ENCODE measurements at regions of chr3 and their contacts with region 1.

Region 1: GRCh38 chr3:47522082-47522987 is 8.8 kb upstream of the ELP6 start:
- DNase-seq: peak; percentile 86
- H3K4me3 ChIP-seq: no peak overlapping the region
- H3K27ac ChIP-seq: no peak overlapping the region
- H3K4me1 ChIP-seq: no peaks in the 10 kb centered on the region
- H3K27me3 ChIP-seq: no peaks in the 10 kb centered on the region
- CTCF ChIP-seq: peak; percentile 85 to 90
- POLR2A ChIP-seq: no peak

Region 2: DNA sequence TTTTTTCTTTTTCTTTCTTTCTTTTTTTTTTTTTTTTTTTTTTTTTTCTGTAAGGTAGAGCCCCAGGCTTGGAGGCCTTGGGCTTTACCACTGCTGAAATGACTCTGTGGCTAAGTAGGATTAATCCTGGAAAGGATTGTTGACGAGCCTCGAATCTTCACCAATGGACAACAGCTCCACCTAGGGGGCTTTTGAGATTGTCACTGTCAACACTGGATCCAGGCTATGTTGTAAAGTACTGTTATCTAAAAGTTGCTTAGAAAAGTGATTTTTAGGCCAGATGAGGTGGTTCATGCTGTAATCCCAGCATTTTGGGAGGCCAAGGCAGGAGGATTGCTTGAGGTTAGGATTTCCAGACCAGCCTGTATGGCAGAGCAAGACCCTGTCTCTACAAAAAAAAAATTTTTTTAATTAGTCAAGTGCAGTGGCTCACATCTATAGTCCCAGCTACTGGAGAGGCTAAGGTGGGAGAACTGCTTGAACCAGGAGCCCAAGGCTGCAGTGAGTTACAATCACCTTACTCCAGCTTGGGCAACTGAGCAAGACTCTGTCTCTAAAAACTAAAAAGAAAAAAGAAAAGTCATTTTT is 198.0 kb before region 1 on chr3:
- CTCF ChIA-PET with region 1: no interaction called
- POLR2A ChIA-PET with region 1: no interaction called
- dilution Hi-C with region 1: no loop called
- intact Hi-C with region 1: no loop called
- DNase-seq: peak; percentile 77
- H3K4me3 ChIP-seq: no peak overlapping the region
- H3K27ac ChIP-seq: no peak overlapping the region
- H3K4me1 ChIP-seq: no peaks in the 10 kb centered on the region
- H3K27me3 ChIP-seq: no peaks in the 10 kb centered on the region
- CTCF ChIP-seq: peak; percentile 60 to 72
- POLR2A ChIP-seq: no peak

Region 3: DNA sequence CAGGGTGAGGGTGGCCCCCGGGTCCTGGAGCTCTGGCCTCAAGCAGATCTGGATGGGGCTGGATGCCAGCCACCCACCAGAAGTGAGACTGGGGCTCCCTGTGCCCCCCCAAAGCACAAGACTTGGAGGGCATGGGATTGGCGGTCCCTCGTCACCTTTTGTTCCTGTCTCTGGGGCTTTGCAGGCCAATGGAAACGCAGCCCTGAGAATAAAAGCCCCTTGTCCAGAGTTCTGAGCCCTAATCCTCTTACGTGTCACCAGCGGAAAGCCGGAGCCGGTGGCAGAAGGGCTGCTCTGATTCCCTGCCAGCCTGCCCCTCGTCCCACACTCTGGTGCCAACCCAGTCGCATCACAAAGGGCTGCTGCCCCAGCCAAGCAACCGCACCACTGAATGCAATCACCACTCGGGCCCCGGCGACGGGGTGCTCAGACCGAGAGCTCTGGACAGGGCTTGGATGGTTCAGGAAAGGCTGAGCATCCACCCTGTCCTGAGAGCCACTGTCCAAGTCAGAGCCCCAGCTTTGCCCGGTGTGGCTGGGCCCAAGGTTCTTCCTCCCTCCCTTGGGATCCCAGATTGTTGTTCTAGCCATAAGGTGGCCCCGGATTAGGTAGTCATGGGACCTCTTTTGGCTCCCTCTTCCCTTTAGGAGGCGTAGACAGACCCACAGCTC is 14.0 kb after region 1 on chr3:
- CTCF ChIA-PET with region 1: interaction called, 25 read pairs
- POLR2A ChIA-PET with region 1: no interaction called
- dilution Hi-C with region 1: no loop called
- intact Hi-C with region 1: no loop called
- DNase-seq: no peak
- H3K4me3 ChIP-seq: no peak overlapping the region
- H3K27ac ChIP-seq: no peak overlapping the region
- H3K4me1 ChIP-seq: no peaks in the 10 kb centered on the region
- H3K27me3 ChIP-seq: peaks cover 5 to 6% of the 10 kb centered on the region in 2 experiments
- CTCF ChIP-seq: no peak
- POLR2A ChIP-seq: no peak

Region 4: DNA sequence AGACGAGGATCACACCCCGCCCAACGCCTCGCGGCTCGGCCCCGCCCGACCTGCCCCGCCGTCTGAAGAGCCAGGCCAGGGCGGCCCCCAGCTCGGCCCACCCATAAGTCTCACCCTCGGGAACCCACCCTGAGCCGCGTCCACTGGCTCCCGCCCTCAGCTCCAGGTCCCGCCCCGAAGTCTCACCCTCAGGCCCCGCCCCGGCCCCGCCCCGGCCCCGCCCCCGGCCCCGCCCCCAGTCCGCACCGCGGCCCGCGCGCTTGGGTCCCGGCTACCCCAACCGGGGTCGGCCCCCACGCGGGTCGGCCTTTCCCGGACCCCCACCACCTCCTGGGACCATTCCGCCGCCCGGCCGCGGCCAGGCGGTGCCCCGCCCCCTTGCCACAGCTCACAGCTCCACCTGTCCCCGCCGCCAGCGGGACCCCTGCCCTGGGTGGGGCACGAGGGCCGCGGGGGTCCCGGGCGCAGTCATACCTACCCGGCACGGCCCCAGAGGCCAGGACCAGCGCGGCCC is 55.8 kb after region 1 on chr3:
- CTCF ChIA-PET with region 1: interaction called, 4 read pairs
- POLR2A ChIA-PET with region 1: no interaction called
- dilution Hi-C with region 1: no loop called
- intact Hi-C with region 1: loop called (anchors 5 kb)
- DNase-seq: no peak
- H3K4me3 ChIP-seq: peak overlapping the region; percentile 23 to 36 (median 24)
- H3K27ac ChIP-seq: no peak overlapping the region
- H3K4me1 ChIP-seq: no peaks in the 10 kb centered on the region
- H3K27me3 ChIP-seq: peaks cover 17% of the 10 kb centered on the region in 2 experiments
- CTCF ChIP-seq: no peak
- POLR2A ChIP-seq: no peak

Region 5: GRCh38 chr3:47791193-47791855 is 269.0 kb after region 1 on chr3:
- CTCF ChIA-PET with region 1: interaction called, 99 read pairs
- POLR2A ChIA-PET with region 1: interaction called, 4 read pairs
- dilution Hi-C with region 1: no loop called
- intact Hi-C with region 1: loop called (anchors 1 kb)
- DNase-seq: no peak
- H3K4me3 ChIP-seq: no peak overlapping the region
- H3K27ac ChIP-seq: no peak overlapping the region
- H3K4me1 ChIP-seq: no peaks in the 10 kb centered on the region
- H3K27me3 ChIP-seq: no peaks in the 10 kb centered on the region
- CTCF ChIP-seq: no peak
- POLR2A ChIP-seq: no peak

Region 6: DNA sequence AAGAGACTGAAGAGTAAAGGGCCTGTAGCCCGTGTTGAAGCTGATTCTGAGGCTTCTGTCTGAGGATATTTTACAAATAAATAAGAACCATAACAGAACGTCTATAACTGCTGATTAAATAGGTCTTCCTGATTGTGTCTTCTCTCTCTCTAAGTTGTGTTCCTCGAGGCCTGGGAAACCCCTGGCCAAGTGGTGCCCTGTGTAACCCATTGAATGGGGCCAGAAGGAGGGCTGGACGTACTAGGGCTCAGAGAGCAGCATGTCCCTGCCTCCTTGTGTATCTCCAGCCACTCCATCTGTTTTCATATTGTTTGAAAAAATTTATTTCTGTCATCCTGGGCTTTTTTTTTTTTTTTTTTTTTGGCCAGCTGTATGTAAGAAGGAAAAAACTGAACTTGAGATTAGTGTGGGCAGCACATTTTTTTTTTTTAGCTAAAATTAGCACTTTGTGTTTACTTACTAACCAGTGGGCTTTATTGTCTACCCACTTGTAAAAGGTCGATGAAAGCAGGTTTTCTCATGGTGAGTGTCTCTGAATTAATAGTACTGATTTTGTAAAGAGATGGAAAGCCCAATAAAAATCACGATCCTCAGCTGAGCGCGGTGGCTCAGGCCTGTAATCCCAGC is 291.3 kb after region 1 on chr3:
- CTCF ChIA-PET with region 1: interaction called, 10 read pairs
- POLR2A ChIA-PET with region 1: no interaction called
- dilution Hi-C with region 1: no loop called
- intact Hi-C with region 1: no loop called
- DNase-seq: no peak
- H3K4me3 ChIP-seq: no peak overlapping the region
- H3K27ac ChIP-seq: no peak overlapping the region
- H3K4me1 ChIP-seq: no peaks in the 10 kb centered on the region
- H3K27me3 ChIP-seq: no peaks in the 10 kb centered on the region
- CTCF ChIP-seq: no peak
- POLR2A ChIP-seq: no peak

Region 7: GRCh38 chr3:48151058-48151806 is 628.9 kb after region 1 on chr3:
- CTCF ChIA-PET with region 1: interaction called, 24 read pairs
- POLR2A ChIA-PET with region 1: no interaction called
- dilution Hi-C with region 1: no loop called
- intact Hi-C with region 1: loop called (anchors 1 kb)
- DNase-seq: peak; percentile 88
- H3K4me3 ChIP-seq: no peak overlapping the region
- H3K27ac ChIP-seq: peak overlapping the region; percentile 18
- H3K4me1 ChIP-seq: peaks cover 10% of the 10 kb centered on the region
- H3K27me3 ChIP-seq: no peaks in the 10 kb centered on the region
- CTCF ChIP-seq: peak; percentile 83 to 87
- POLR2A ChIP-seq: no peak